ENCODE measurements at regions of chr7 and their contacts with region 1.

Region 1: DNA sequence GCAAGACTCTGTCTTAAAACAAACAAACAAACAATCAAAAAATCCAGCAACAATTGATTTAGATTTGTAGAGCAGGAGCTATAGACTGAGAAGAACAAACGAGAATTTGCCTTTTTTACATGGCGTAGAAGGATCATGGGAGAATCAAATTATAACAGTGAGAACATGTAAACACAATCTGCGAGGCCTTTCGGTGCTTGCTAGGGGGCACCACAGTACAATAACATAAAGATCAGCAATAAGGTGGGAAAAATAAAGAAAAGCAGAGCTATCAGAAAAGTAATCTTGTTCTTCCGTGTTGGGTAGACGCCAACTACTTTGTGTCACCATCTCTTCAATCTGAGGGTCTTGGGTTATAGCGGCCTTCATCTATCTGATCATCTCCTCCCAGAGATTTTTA is 82.2 kb downstream of the NOD1 start:
- DNase-seq: no peak
- ATAC-seq: peak; percentile 63
- H3K4me3 ChIP-seq: no peak overlapping the region
- H3K27ac ChIP-seq: no peak overlapping the region
- H3K4me1 ChIP-seq: no peaks in the 10 kb centered on the region
- H3K27me3 ChIP-seq: no peaks in the 10 kb centered on the region
- CTCF ChIP-seq: peak; percentile 12 to 36 (median 24); a peak in 3 of 6 replicates
- POLR2A ChIP-seq: no peak
- RAD21 ChIP-seq: peak; percentile 36; the same call in 1 of the 2 replicates

Region 2: GRCh38 chr7:30173058-30173897 is 223.1 kb before region 1 on chr7:
- CTCF ChIA-PET with region 1: no interaction called
- POLR2A ChIA-PET with region 1: no interaction called
- RAD21 ChIA-PET with region 1: no interaction called
- intact Hi-C with region 1: loop called (anchors 5 kb)
- DNase-seq: no peak
- ATAC-seq: peak; percentile 78
- H3K4me3 ChIP-seq: no peak overlapping the region
- H3K27ac ChIP-seq: no peak overlapping the region
- H3K4me1 ChIP-seq: peaks cover 0 to 4% of the 10 kb centered on the region in 2 experiments; a peak in 1 of 4 replicates
- H3K27me3 ChIP-seq: no peaks in the 10 kb centered on the region
- CTCF ChIP-seq: no peak
- POLR2A ChIP-seq: no peak
- RAD21 ChIP-seq: peak; percentile 28; the same call in 1 of the 2 replicates

Region 3: GRCh38 chr7:30412810-30413504 is 16.6 kb after region 1 on chr7:
- CTCF ChIA-PET with region 1: no interaction called
- POLR2A ChIA-PET with region 1: no interaction called
- RAD21 ChIA-PET with region 1: no interaction called
- intact Hi-C with region 1: no loop called
- DNase-seq: peak; percentile 68
- ATAC-seq: peak; percentile 97
- H3K4me3 ChIP-seq: no peak overlapping the region
- H3K27ac ChIP-seq: no peak overlapping the region
- H3K4me1 ChIP-seq: no peaks in the 10 kb centered on the region; a peak in 1 of 4 replicates
- H3K27me3 ChIP-seq: no peaks in the 10 kb centered on the region
- CTCF ChIP-seq: peak; percentile 34 to 77 (median 66); a peak in 5 of 6 replicates
- POLR2A ChIP-seq: no peak
- RAD21 ChIP-seq: peak; percentile 90

Region 4: DNA sequence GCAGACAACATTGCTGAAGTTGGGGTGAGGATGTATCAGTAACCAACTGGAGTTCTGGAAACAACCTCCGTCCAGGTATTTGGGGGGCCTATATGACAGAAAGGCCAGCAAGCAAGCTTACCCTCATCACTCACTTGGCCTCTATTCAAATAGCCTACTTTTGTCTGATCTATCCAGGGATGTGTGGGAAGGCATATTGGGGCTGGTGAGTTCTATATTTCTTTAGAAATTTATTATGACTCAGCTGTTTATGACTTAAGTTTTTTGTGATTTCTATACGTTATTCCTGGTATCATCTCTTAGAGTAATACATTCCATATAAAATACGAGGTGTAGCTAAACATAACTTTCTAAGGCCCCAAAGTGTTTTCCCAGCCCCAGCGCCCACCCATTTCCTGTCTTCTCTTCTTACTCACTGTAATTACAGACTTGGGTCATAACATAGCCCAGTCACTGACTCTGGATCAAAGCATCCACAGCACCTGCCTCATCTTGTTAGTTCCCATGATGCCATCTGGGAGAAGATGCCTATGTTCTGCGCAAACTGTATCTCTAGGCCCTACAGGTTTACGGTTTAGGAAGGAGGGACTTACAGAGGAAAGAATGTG is 216.4 kb after region 1 on chr7:
- CTCF ChIA-PET with region 1: no interaction called
- POLR2A ChIA-PET with region 1: no interaction called
- RAD21 ChIA-PET with region 1: no interaction called
- intact Hi-C with region 1: no loop called
- DNase-seq: no peak
- ATAC-seq: no peak
- H3K4me3 ChIP-seq: no peak overlapping the region
- H3K27ac ChIP-seq: no peak overlapping the region
- H3K4me1 ChIP-seq: no peaks in the 10 kb centered on the region
- H3K27me3 ChIP-seq: no peaks in the 10 kb centered on the region
- CTCF ChIP-seq: no peak
- POLR2A ChIP-seq: no peak
- RAD21 ChIP-seq: no peak